Gastrocnemius medialis (tissue), 4 donors: ENCODE measurements at regions of chr16 and their contacts with region 1.

Region 1: GRCh38 chr16:15704545-15704987 is 54.5 kb downstream of the NDE1 start:
- DNase-seq: peak; percentile 31 to 65
- ATAC-seq: peak; percentile 87 to 88
- H3K4me3 ChIP-seq: no peak overlapping the region
- H3K27ac ChIP-seq: no peak overlapping the region
- H3K4me1 ChIP-seq: no peaks in the 10 kb centered on the region
- H3K27me3 ChIP-seq: no peaks in the 10 kb centered on the region
- CTCF ChIP-seq: peak; percentile 61 to 85 (median 77)
- POLR2A ChIP-seq: no peak

Region 2: GRCh38 chr16:15427648-15428239 is 276.8 kb before region 1 on chr16:
- in situ Hi-C with region 1: no loop called
- intact Hi-C with region 1: loop called (anchors 2 kb)
- DNase-seq: peak in 1 of 2 donors; percentile 33
- ATAC-seq: peak; percentile 61 to 77
- H3K4me3 ChIP-seq: no peak overlapping the region
- H3K27ac ChIP-seq: peak overlapping the region; percentile 9 to 49 (median 27)
- H3K4me1 ChIP-seq: peaks cover 4% of the 10 kb centered on the region in 2 donors
- H3K27me3 ChIP-seq: no peaks in the 10 kb centered on the region
- CTCF ChIP-seq: peak; percentile 41 to 65 (median 59)
- POLR2A ChIP-seq: no peak

Region 3: GRCh38 chr16:15553313-15554088 is 151.1 kb before region 1 on chr16:
- in situ Hi-C with region 1: no loop called
- intact Hi-C with region 1: loop called (anchors 10 kb)
- DNase-seq: no peak
- ATAC-seq: no peak
- H3K4me3 ChIP-seq: no peak overlapping the region
- H3K27ac ChIP-seq: peak overlapping the region in 2 of 4 donors; percentile 43
- H3K4me1 ChIP-seq: peaks cover 0 to 8% of the 10 kb centered on the region in 2 donors
- H3K27me3 ChIP-seq: no peaks in the 10 kb centered on the region
- CTCF ChIP-seq: no peak
- POLR2A ChIP-seq: no peak

Region 4: GRCh38 chr16:15650019-15650697 is 54.4 kb before region 1 on chr16 and contains the start of gene NDE1:
- in situ Hi-C with region 1: no loop called
- intact Hi-C with region 1: loop called (anchors 5 kb)
- DNase-seq: peak; percentile 88
- ATAC-seq: peak; percentile 97 to 98
- H3K4me3 ChIP-seq: peak within 1 kb of the TSS; percentile 69 to 98 (median 80)
- H3K27ac ChIP-seq: peak within 1 kb of the TSS; percentile 81 to 95 (median 85)
- H3K4me1 ChIP-seq: peaks cover 5 to 13% of the 10 kb centered on the region in 2 donors
- H3K27me3 ChIP-seq: no peaks in the 10 kb centered on the region
- CTCF ChIP-seq: peak in 1 of 5 experiments; percentile 18
- POLR2A ChIP-seq: peak; percentile 68 to 73
- total RNA-seq, gene NDE1: 4.0 to 26.2 (median 11.9) TPM

Region 5: GRCh38 chr16:15811481-15812400 is 107.2 kb after region 1 on chr16:
- in situ Hi-C with region 1: no loop called
- intact Hi-C with region 1: no loop called
- DNase-seq: peak in 1 of 2 donors; percentile 35
- ATAC-seq: peak; percentile 76 to 93
- H3K4me3 ChIP-seq: no peak overlapping the region
- H3K27ac ChIP-seq: peak overlapping the region; percentile 39 to 64 (median 51)
- H3K4me1 ChIP-seq: peaks cover 13% of the 10 kb centered on the region in 2 donors
- H3K27me3 ChIP-seq: peaks cover 0 to 4% (median 0%) of the 10 kb centered on the region in 3 donors
- CTCF ChIP-seq: peak in 1 of 5 experiments; percentile 13
- POLR2A ChIP-seq: no peak

Region 6: GRCh38 chr16:15835136-15835878 is 130.7 kb after region 1 on chr16:
- in situ Hi-C with region 1: no loop called
- intact Hi-C with region 1: no loop called
- DNase-seq: no peak
- ATAC-seq: no peak
- H3K4me3 ChIP-seq: no peak overlapping the region
- H3K27ac ChIP-seq: no peak overlapping the region
- H3K4me1 ChIP-seq: no peaks in the 10 kb centered on the region
- H3K27me3 ChIP-seq: no peaks in the 10 kb centered on the region
- CTCF ChIP-seq: no peak
- POLR2A ChIP-seq: no peak